ENCODE measurements at regions of chr11 and their contacts with region 1.

Region 1: GRCh38 chr11:63838678-63839507 is at the start of gene MARK2:
- DNase-seq: peak; percentile 95
- ATAC-seq: peak; percentile 79
- H3K4me3 ChIP-seq: peak within 1 kb of the TSS; percentile 69 to 96 (median 93)
- H3K27ac ChIP-seq: peak within 1 kb of the TSS; percentile 70
- H3K4me1 ChIP-seq: peaks cover 67% of the 10 kb centered on the region
- H3K27me3 ChIP-seq: no peaks in the 10 kb centered on the region; a peak in 1 of 5 replicates
- CTCF ChIP-seq: 0 out of 2 replicates have a peak, but pooled peaks have one; percentile 3
- EP300 ChIP-seq: no peak
- POLR2A ChIP-seq: peak in 1 of 2 experiments; percentile 58; a peak in 2 of 4 replicates
- RAD21 ChIP-seq: 0 out of 2 replicates have a peak, but pooled peaks have one; percentile 30
- total RNA-seq, gene MARK2: 13.9 and 17.4 TPM in 2 replicates

Region 2: DNA sequence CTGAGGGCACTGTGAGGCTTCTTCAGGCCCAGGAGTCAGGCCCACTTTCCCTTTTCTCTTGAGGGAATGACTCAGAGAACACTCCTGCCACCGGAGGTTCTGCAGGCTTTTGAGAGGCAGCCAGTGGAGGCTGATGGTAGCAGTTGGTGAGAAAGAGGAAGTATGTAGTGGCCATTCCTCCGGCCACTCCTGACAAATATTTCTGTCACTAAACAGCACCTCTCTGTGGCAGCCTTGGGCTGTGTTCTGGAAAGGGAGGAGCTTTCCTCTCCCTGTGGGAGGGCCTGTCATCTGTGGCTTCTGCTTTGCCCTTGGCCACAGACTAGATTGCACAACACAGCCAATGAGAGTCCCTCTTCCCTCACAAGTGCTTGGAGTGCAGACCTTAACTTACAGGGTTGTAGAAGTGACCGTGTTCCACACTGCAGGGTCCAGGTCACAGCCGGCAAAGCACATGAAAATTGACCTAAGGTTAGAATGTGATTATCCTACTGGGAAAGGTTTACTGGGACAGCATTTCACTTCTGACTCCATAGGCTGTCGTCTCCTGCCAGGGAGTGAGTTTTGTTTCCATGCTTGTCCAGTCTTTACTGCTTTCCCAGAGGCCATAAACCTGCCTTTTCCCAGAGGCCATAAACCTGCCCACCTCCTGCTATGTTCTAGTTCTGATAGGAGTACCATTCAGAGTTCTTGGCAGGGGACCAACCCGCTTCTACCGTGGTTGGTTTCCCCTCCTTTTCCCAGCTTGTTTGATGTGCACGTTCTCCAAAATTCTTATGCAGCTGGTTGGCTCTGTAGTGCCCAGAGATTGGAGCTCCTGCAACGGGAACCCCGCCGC is 33.3 kb after region 1 on chr11:
- CTCF ChIA-PET with region 1: interaction called, 12 read pairs
- POLR2A ChIA-PET with region 1: interaction called, 9 read pairs
- in situ Hi-C with region 1: no loop called
- intact Hi-C with region 1: loop called (anchors 1 kb)
- DNase-seq: peak; percentile 96
- ATAC-seq: peak; percentile 99
- H3K4me3 ChIP-seq: peak overlapping the region in 1 of 3 experiments; percentile 35; a peak in 2 of 6 replicates
- H3K27ac ChIP-seq: peak overlapping the region; percentile 64
- H3K4me1 ChIP-seq: peaks cover 26% of the 10 kb centered on the region
- H3K27me3 ChIP-seq: no peaks in the 10 kb centered on the region
- CTCF ChIP-seq: peak; percentile 95
- EP300 ChIP-seq: peak in 1 of 2 experiments; percentile 38; a peak in 1 of 4 replicates
- POLR2A ChIP-seq: no peak
- RAD21 ChIP-seq: peak; percentile 91

Region 3: GRCh38 chr11:63888170-63889086 is 49.5 kb after region 1 on chr11:
- CTCF ChIA-PET with region 1: no interaction called
- POLR2A ChIA-PET with region 1: interaction called, 23 read pairs
- in situ Hi-C with region 1: loop called (anchors 5 kb)
- intact Hi-C with region 1: loop called (anchors 1 kb)
- DNase-seq: peak; percentile 81
- ATAC-seq: peak; percentile 93
- H3K4me3 ChIP-seq: peak overlapping the region; percentile 46 to 79 (median 53)
- H3K27ac ChIP-seq: peak overlapping the region; percentile 92
- H3K4me1 ChIP-seq: peaks cover 41% of the 10 kb centered on the region
- H3K27me3 ChIP-seq: no peaks in the 10 kb centered on the region
- CTCF ChIP-seq: peak; percentile 26
- EP300 ChIP-seq: no peak
- POLR2A ChIP-seq: peak; percentile 71 to 87
- RAD21 ChIP-seq: peak; percentile 60; the same call in 1 of the 2 replicates

Region 4: DNA sequence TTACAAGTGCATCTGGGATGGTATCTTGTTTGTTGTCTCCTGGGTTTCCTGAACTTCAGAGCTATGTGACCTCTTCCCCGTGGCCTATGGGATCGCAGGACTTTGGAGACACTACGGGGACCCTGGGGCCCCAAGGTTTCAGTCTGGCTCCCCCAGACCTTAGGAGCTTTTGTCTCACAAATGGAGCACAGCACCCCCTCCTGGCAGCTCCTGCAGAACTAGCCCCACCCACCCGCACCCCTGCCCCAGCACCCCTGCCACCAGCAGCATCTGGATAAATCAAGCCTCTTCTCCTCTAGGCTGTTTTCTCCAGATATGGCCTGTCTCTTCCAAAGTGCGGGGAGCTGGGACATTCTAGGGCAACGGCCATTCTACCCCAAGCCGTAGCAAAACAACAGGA is 67.7 kb after region 1 on chr11:
- CTCF ChIA-PET with region 1: interaction called, 9 read pairs
- POLR2A ChIA-PET with region 1: interaction called, 3 read pairs
- in situ Hi-C with region 1: no loop called
- intact Hi-C with region 1: loop called (anchors 1 kb)
- DNase-seq: no peak
- ATAC-seq: peak; percentile 8; the same call in 1 of the 3 replicates
- H3K4me3 ChIP-seq: no peak overlapping the region
- H3K27ac ChIP-seq: no peak overlapping the region
- H3K4me1 ChIP-seq: no peaks in the 10 kb centered on the region
- H3K27me3 ChIP-seq: no peaks in the 10 kb centered on the region
- CTCF ChIP-seq: peak; percentile 28; the same call in 1 of the 2 replicates
- EP300 ChIP-seq: no peak
- POLR2A ChIP-seq: no peak
- RAD21 ChIP-seq: no peak

Region 5: GRCh38 chr11:63916837-63917691 is 78.2 kb after region 1 on chr11 and contains the start of gene RCOR2:
- CTCF ChIA-PET with region 1: interaction called, 9 read pairs
- POLR2A ChIA-PET with region 1: interaction called, 15 read pairs
- in situ Hi-C with region 1: no loop called
- intact Hi-C with region 1: no loop called
- DNase-seq: peak; percentile 70
- ATAC-seq: peak; percentile 0
- H3K4me3 ChIP-seq: peak within 1 kb of the TSS; percentile 64 to 84 (median 76)
- H3K27ac ChIP-seq: peak within 1 kb of the TSS; percentile 82
- H3K4me1 ChIP-seq: peaks cover 48% of the 10 kb centered on the region
- H3K27me3 ChIP-seq: no peaks in the 10 kb centered on the region; a peak in 2 of 5 replicates
- CTCF ChIP-seq: 0 out of 2 replicates have a peak, but pooled peaks have one; percentile 1
- EP300 ChIP-seq: no peak
- POLR2A ChIP-seq: no peak
- RAD21 ChIP-seq: no peak
- total RNA-seq, gene RCOR2: 6.9 and 8.5 TPM in 2 replicates

Region 6: DNA sequence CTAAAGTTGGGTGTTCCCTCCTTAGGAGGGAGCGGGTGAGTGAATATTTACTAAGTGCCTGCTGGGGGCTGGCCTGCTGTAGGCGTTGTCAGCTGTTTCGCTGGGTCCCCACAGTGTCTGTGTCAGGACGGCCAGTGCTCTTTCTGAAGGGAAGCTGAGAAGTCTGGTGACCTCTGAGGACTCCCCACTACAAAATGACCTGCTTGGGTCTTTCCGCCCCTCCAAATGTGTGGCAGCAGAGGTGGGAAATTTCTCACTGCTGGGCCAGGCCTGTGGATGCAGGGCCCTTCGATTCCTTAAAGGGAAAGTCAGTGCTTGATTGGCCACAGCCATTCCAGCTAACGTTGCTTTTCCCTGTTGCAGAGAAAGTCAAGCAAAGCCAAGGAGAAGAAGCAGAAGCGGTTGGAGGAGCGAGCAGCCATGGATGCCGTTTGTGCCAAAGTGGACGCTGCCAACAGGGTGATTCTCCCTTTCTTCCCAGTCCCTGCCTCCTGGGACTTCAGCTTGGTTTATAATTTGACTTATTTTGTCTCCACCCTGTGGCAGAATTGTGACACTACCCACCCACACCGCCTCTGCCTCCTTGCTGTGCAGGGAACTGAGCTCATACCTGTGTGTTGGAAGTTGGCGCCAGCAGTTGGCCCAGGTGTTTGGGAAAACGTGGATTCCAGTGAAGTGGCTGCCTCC is 106.7 kb after region 1 on chr11:
- CTCF ChIA-PET with region 1: interaction called, 15 read pairs
- POLR2A ChIA-PET with region 1: interaction called, 11 read pairs
- in situ Hi-C with region 1: loop called (anchors 10 kb)
- intact Hi-C with region 1: loop called (anchors 1 kb)
- DNase-seq: peak; percentile 62
- ATAC-seq: peak; percentile 94
- H3K4me3 ChIP-seq: 0 out of 6 replicates have a peak overlapping the region, but pooled peaks of 1 of the 3 experiments have one; percentile 2
- H3K27ac ChIP-seq: peak overlapping the region; percentile 54
- H3K4me1 ChIP-seq: peaks cover 28% of the 10 kb centered on the region
- H3K27me3 ChIP-seq: no peaks in the 10 kb centered on the region
- CTCF ChIP-seq: peak; percentile 84
- EP300 ChIP-seq: no peak
- POLR2A ChIP-seq: no peak
- RAD21 ChIP-seq: peak; percentile 73

Region 7: GRCh38 chr11:64021757-64022093 is 182.8 kb after region 1 on chr11:
- CTCF ChIA-PET with region 1: no interaction called
- POLR2A ChIA-PET with region 1: no interaction called
- in situ Hi-C with region 1: no loop called
- intact Hi-C with region 1: no loop called
- DNase-seq: no peak
- ATAC-seq: no peak
- H3K4me3 ChIP-seq: no peak overlapping the region
- H3K27ac ChIP-seq: no peak overlapping the region
- H3K4me1 ChIP-seq: peaks cover 15% of the 10 kb centered on the region
- H3K27me3 ChIP-seq: no peaks in the 10 kb centered on the region
- CTCF ChIP-seq: no peak
- EP300 ChIP-seq: no peak
- POLR2A ChIP-seq: no peak
- RAD21 ChIP-seq: no peak

Region 8: GRCh38 chr11:64152841-64153691 is 314.2 kb after region 1 on chr11:
- CTCF ChIA-PET with region 1: no interaction called
- POLR2A ChIA-PET with region 1: no interaction called
- in situ Hi-C with region 1: loop called (anchors 10 kb)
- intact Hi-C with region 1: loop called (anchors 10 kb)
- DNase-seq: peak; percentile 15
- ATAC-seq: peak; percentile 84
- H3K4me3 ChIP-seq: no peak overlapping the region; a peak in 1 of 6 replicates
- H3K27ac ChIP-seq: no peak overlapping the region
- H3K4me1 ChIP-seq: peaks cover 34% of the 10 kb centered on the region
- H3K27me3 ChIP-seq: no peaks in the 10 kb centered on the region
- CTCF ChIP-seq: peak; percentile 94
- EP300 ChIP-seq: no peak
- POLR2A ChIP-seq: no peak
- RAD21 ChIP-seq: peak; percentile 75

Measured in HepG2 (cell line).